Activated CD4-positive, alpha-beta memory T cell treated with anti-CD3 and anti-CD28 coated beads for 36 hours (primary cell): ENCODE measurements at regions of chr6 and their contacts with region 1.

Region 1: GRCh38 chr6:117265410-117266256 is at the start of gene VGLL2:
- DNase-seq: peak; percentile 12
- H3K4me3 Mint-ChIP-seq: peak within 1 kb of the TSS; percentile 34
- H3K27ac Mint-ChIP-seq: no peak within 1 kb of the TSS
- H3K4me1 Mint-ChIP-seq: peaks cover 15% of the 10 kb centered on the region
- H3K27me3 Mint-ChIP-seq: peaks cover 80% of the 10 kb centered on the region
- total RNA-seq, gene VGLL2: not detected

Region 2: GRCh38 chr6:116615937-116616736 is 649.5 kb before region 1 on chr6 and contains the start of gene RSPH4A:
- CTCF ChIA-PET with region 1: no interaction called
- POLR2A ChIA-PET with region 1: no interaction called
- intact Hi-C with region 1: loop called (anchors 10 kb)
- DNase-seq: peak; percentile 85
- H3K4me3 Mint-ChIP-seq: peak within 1 kb of the TSS; percentile 82
- H3K27ac Mint-ChIP-seq: no peak within 1 kb of the TSS
- H3K4me1 Mint-ChIP-seq: peaks cover 17% of the 10 kb centered on the region
- H3K27me3 Mint-ChIP-seq: no peaks in the 10 kb centered on the region
- total RNA-seq, gene RSPH4A: not detected

Region 3: DNA sequence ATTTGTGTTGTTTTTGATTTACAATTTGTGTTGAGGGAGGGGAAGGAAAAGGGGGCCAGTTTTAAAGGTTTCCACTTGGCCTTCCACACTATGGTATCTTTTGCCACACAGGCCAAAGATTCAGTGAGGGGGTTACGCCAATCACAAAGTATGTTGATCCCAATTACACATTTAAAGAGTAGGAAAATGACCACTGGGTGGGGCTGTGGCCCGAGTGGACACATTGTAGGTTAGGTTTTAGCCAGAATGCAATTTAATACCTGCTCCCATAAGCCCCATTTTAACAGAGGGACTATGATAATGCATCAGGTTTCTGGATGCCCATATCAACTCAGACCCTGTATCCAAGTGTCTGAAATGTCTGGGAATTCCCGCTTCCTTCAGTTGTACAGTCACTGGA is 15.3 kb after region 1 on chr6:
- CTCF ChIA-PET with region 1: no interaction called
- POLR2A ChIA-PET with region 1: no interaction called
- intact Hi-C with region 1: no loop called
- DNase-seq: no peak
- H3K4me3 Mint-ChIP-seq: no peak overlapping the region
- H3K27ac Mint-ChIP-seq: no peak overlapping the region
- H3K4me1 Mint-ChIP-seq: no peaks in the 10 kb centered on the region
- H3K27me3 Mint-ChIP-seq: peaks cover 17% of the 10 kb centered on the region